H1 (cell line): ENCODE measurements at regions of chr15 and their contacts with region 1.

Region 1: GRCh38 chr15:70722266-70723121 is 40.9 kb downstream of the UACA start:
- DNase-seq: no peak
- H3K4me3 ChIP-seq: no peak overlapping the region
- H3K27ac ChIP-seq: no peak overlapping the region
- H3K4me1 ChIP-seq: no peaks in the 10 kb centered on the region
- H3K27me3 ChIP-seq: no peaks in the 10 kb centered on the region
- CTCF ChIP-seq: peak in 2 of 3 experiments; percentile 33 to 45; a peak in 2 of 4 replicates
- EP300 ChIP-seq: no peak
- POLR2A ChIP-seq: no peak
- RAD21 ChIP-seq: peak; percentile 38 to 44

Region 2: DNA sequence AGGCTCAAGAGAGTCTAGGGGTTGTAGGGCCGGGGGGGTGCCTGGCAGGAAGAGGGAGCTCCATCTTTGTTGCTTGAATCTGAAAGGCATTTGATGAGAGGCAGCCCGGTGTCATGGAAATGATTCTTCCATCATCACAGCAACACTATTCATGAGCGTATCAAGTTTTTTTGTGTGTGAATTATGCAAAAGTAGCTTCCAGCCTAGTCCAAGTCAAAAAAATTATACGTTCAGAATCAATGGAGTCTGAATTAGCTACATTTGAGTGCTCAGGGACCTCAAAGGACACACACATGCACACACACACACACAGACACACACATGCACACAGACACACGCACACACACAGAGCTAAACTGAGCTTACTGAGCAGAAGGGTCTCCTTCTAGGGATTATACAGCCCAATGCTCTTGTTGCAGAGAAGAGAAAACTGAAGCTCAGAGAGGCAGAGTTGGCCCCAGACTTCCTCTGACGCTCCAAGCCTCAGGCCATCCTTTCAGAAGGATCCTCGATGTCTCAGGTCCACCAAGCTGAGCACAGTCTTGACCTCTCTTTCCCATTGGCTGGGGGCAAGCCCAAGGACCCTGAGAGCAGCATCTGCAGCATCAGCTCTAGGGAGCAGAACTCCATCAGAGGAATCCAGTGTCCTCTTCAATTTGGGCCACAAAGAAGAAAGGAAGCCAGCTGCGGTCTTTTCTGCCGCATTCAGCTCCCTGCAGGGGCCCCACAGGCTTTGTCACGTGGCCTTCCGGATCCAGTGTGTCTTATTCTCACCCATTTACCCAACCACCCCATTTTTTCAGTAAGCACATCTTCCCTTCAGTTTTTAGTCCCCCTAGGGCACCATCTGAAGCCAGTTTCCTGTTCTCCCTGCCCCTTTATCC is 187.2 kb before region 1 on chr15:
- CTCF ChIA-PET with region 1: no interaction called
- POLR2A ChIA-PET with region 1: no interaction called
- DNase-seq: peak in 1 of 2 experiments; percentile 39
- H3K4me3 ChIP-seq: no peak overlapping the region
- H3K27ac ChIP-seq: no peak overlapping the region
- H3K4me1 ChIP-seq: peaks cover 0 to 4% (median 0%) of the 10 kb centered on the region in 4 experiments; a peak in 2 of 7 replicates
- H3K27me3 ChIP-seq: no peaks in the 10 kb centered on the region
- CTCF ChIP-seq: no peak
- EP300 ChIP-seq: no peak
- POLR2A ChIP-seq: no peak
- RAD21 ChIP-seq: no peak

Region 3: GRCh38 chr15:70569091-70569621 is 153.3 kb before region 1 on chr15:
- CTCF ChIA-PET with region 1: interaction called, 13 read pairs
- POLR2A ChIA-PET with region 1: no interaction called
- DNase-seq: no peak
- H3K4me3 ChIP-seq: no peak overlapping the region
- H3K27ac ChIP-seq: no peak overlapping the region
- H3K4me1 ChIP-seq: peaks cover 0 to 3% (median 1%) of the 10 kb centered on the region in 4 experiments; a peak in 1 of 7 replicates
- H3K27me3 ChIP-seq: 0 out of 7 replicates have a peak, but pooled peaks cover 0 to 2% (median 0%) of the 10 kb centered on the region in 4 experiments
- CTCF ChIP-seq: peak; percentile 47 to 72 (median 70)
- EP300 ChIP-seq: no peak
- POLR2A ChIP-seq: no peak
- RAD21 ChIP-seq: peak; percentile 81 to 88

Region 4: DNA sequence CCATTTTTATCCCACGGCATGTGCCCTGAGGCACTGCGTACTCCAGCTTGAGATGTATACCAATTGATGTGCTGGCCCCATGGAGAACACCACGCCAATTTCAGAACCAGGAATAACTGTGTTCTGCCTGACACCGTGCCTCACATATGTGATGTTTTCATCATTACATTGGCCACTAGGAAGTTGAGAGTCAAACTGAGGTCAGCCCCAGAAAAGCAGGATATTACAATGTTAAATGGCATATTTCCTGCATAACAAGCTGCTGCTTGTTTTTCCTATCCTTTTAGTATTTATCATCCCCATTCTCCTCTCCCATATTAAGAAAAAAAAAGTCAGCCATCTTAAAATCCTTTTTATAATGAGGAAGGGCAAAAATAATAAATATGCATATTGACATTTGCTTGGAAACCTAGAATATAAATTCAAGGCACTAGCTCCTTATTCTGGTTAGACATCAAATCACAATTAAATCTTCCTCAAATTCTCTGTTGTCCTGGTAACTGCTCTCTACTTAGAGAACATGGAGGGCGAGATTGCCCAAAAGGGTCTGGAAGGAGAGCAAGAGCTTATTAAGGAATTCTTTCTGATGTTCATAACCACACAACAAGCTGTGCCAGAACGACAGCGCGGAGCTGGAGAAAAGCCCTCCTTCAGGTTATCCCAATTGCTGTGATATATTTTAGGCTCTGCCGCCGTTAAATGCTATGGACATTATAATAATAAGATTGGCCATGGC is 71.8 kb before region 1 on chr15:
- CTCF ChIA-PET with region 1: no interaction called
- POLR2A ChIA-PET with region 1: no interaction called
- DNase-seq: no peak
- H3K4me3 ChIP-seq: no peak overlapping the region
- H3K27ac ChIP-seq: no peak overlapping the region
- H3K4me1 ChIP-seq: no peaks in the 10 kb centered on the region
- H3K27me3 ChIP-seq: no peaks in the 10 kb centered on the region
- CTCF ChIP-seq: no peak
- EP300 ChIP-seq: no peak
- POLR2A ChIP-seq: no peak
- RAD21 ChIP-seq: no peak

Region 5: DNA sequence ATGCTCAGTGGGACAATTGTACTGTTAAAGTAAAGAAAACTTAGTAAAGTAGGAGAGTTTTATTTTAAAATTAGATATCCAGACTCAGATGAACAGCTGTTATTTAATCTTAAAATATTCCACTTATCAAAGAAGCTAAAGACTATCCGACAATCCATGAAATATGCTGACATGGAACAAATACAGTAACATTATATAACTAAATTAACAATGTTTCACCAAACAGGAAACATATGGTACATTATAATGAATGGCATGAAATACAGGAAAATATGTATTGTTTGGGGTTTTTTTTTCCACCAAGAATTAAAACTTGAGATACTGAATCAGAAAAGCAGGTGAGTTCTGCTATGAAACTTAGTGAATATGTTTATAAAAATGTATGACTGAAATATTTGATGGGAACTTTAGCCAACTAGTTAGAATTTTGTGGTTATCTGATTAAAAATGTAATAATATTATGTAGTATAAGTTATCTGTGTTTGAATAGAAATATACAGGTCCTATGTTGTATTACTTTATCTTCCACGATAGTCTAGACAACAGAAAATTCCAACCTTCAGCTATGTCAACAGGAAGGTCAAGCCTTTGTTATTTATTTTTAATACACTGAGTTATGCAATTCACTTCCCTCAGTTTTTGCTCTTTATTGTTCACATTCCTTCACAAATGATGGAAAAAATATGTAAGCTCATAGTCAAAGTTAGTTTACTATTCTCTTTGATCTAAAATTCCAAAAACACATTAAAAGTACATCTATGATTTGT is 31.8 kb before region 1 on chr15:
- CTCF ChIA-PET with region 1: interaction called, 10 read pairs
- POLR2A ChIA-PET with region 1: no interaction called
- DNase-seq: no peak
- H3K4me3 ChIP-seq: no peak overlapping the region
- H3K27ac ChIP-seq: no peak overlapping the region
- H3K4me1 ChIP-seq: no peaks in the 10 kb centered on the region
- H3K27me3 ChIP-seq: no peaks in the 10 kb centered on the region
- CTCF ChIP-seq: no peak
- EP300 ChIP-seq: no peak
- POLR2A ChIP-seq: no peak
- RAD21 ChIP-seq: no peak

Region 6: GRCh38 chr15:70708839-70709238 is 13.7 kb before region 1 on chr15:
- CTCF ChIA-PET with region 1: interaction called, 43 read pairs
- POLR2A ChIA-PET with region 1: no interaction called
- DNase-seq: no peak
- H3K4me3 ChIP-seq: no peak overlapping the region
- H3K27ac ChIP-seq: no peak overlapping the region
- H3K4me1 ChIP-seq: peaks cover 0 to 6% (median under 1%) of the 10 kb centered on the region in 4 experiments; a peak in 1 of 7 replicates
- H3K27me3 ChIP-seq: no peaks in the 10 kb centered on the region
- CTCF ChIP-seq: no peak
- EP300 ChIP-seq: no peak
- POLR2A ChIP-seq: no peak
- RAD21 ChIP-seq: no peak

Region 7: DNA sequence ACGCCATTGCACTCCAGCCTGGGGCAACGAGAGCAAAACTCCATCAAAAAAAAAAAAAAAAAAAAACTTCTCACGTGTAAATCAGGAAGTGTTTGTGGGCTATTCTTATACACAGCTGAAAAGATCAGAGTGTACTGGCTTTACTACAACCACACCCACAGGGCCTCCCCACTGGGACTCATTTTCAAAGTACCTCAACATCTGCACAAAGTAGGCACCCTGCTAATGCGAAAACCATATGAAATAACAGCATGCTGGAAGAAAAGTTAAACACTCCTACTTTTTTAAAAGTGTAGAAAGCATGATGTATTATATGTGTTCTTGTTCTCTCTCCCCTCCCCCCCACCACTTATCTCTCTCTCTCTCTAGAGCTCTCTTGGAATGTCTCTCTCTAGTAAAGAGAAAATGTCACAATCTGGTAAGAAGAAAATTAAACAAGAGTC is 29.7 kb after region 1 on chr15:
- CTCF ChIA-PET with region 1: interaction called, 14 read pairs
- POLR2A ChIA-PET with region 1: no interaction called
- DNase-seq: no peak
- H3K4me3 ChIP-seq: no peak overlapping the region
- H3K27ac ChIP-seq: no peak overlapping the region
- H3K4me1 ChIP-seq: no peaks in the 10 kb centered on the region
- H3K27me3 ChIP-seq: no peaks in the 10 kb centered on the region
- CTCF ChIP-seq: no peak
- EP300 ChIP-seq: no peak
- POLR2A ChIP-seq: no peak
- RAD21 ChIP-seq: no peak